Activated CD4-positive, alpha-beta memory T cell treated with anti-CD3 and anti-CD28 coated beads for 36 hours (primary cell): ENCODE measurements at regions of chr14 and their contacts with region 1.

Region 1: DNA sequence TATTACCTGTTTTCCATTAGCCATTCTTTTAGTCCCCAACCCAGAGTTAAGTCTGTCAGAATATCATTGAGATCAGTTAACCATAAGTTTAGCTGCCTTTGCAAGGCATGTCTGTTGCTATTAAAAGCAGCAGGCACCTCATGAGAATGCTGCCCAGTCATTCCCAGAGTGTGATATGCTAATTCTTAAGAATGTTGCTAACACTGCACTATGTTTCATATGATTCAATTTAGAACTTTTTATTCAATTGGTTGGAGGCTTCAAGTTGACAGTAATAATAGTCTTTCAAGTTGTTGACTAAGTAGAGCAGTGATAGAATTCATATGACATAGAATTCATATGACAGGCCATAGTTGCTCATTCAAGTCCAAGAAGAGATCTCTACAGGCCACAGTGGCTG is 292.3 kb downstream of the FUT8 start:
- DNase-seq: peak; percentile 66
- H3K4me3 Mint-ChIP-seq: no peak overlapping the region
- H3K27ac Mint-ChIP-seq: peak overlapping the region; percentile 64
- H3K4me1 Mint-ChIP-seq: peaks cover 31% of the 10 kb centered on the region
- H3K27me3 Mint-ChIP-seq: no peaks in the 10 kb centered on the region

Region 2: GRCh38 chr14:65287264-65288131 is 417.4 kb before region 1 on chr14:
- CTCF ChIA-PET with region 1: no interaction called
- POLR2A ChIA-PET with region 1: no interaction called
- intact Hi-C with region 1: loop called (anchors 2 kb)
- DNase-seq: peak; percentile 69
- H3K4me3 Mint-ChIP-seq: peak overlapping the region; percentile 80
- H3K27ac Mint-ChIP-seq: peak overlapping the region; percentile 96
- H3K4me1 Mint-ChIP-seq: peaks cover 64% of the 10 kb centered on the region
- H3K27me3 Mint-ChIP-seq: no peaks in the 10 kb centered on the region

Region 3: GRCh38 chr14:65478596-65478995 is 226.3 kb before region 1 on chr14:
- CTCF ChIA-PET with region 1: no interaction called
- POLR2A ChIA-PET with region 1: no interaction called
- intact Hi-C with region 1: loop called (anchors 2 kb)
- DNase-seq: no peak
- H3K4me3 Mint-ChIP-seq: no peak overlapping the region
- H3K27ac Mint-ChIP-seq: no peak overlapping the region
- H3K4me1 Mint-ChIP-seq: peaks cover 70% of the 10 kb centered on the region
- H3K27me3 Mint-ChIP-seq: no peaks in the 10 kb centered on the region

Region 4: GRCh38 chr14:65804752-65805473 is 100.1 kb after region 1 on chr14:
- CTCF ChIA-PET with region 1: no interaction called
- POLR2A ChIA-PET with region 1: no interaction called
- intact Hi-C with region 1: loop called (anchors 2 kb)
- DNase-seq: peak; percentile 26
- H3K4me3 Mint-ChIP-seq: no peak overlapping the region
- H3K27ac Mint-ChIP-seq: no peak overlapping the region
- H3K4me1 Mint-ChIP-seq: peaks cover 8% of the 10 kb centered on the region
- H3K27me3 Mint-ChIP-seq: no peaks in the 10 kb centered on the region

Region 5: DNA sequence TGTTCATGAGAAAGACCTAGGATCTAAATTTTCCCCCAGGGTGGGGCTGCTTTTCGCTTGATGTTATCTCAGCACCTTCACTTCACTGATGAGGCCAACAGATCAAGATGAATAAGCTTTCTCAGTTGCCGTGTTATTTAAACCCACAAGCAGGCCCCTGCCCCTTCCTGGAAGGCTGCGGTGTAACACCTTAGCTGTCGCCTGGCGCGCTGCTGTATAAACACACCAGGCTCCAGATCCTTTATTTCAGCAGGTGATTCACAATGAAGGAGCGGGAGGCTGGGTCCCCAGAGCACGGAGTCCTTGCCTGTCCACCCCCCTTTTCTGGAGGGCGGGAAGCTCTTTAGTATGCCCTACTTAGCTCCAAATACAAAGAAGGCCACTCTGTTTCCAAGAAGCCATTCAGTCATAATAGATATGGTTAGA is 223.1 kb after region 1 on chr14:
- CTCF ChIA-PET with region 1: no interaction called
- POLR2A ChIA-PET with region 1: no interaction called
- intact Hi-C with region 1: loop called (anchors 10 kb)
- DNase-seq: peak; percentile 92
- H3K4me3 Mint-ChIP-seq: peak overlapping the region; percentile 18
- H3K27ac Mint-ChIP-seq: peak overlapping the region; percentile 43
- H3K4me1 Mint-ChIP-seq: peaks cover 51% of the 10 kb centered on the region
- H3K27me3 Mint-ChIP-seq: peaks cover 2% of the 10 kb centered on the region